Ovary (tissue), 10 donors: ENCODE measurements at regions of chr3 and their contacts with region 1.

Region 1: GRCh38 chr3:134250717-134251220 is at the start of gene RYK:
- DNase-seq: peak; percentile 73 to 88 (median 82)
- H3K4me3 ChIP-seq: peak within 1 kb of the TSS; percentile 83
- H3K27ac ChIP-seq: peak within 1 kb of the TSS; percentile 93 to 97
- H3K4me1 ChIP-seq: peaks cover 17% of the 10 kb centered on the region
- H3K27me3 ChIP-seq: no peaks in the 10 kb centered on the region
- CTCF ChIP-seq: peak in 1 of 3 donors; percentile 14
- EP300 ChIP-seq: no peak
- POLR2A ChIP-seq: peak; percentile 71
- total RNA-seq, gene RYK: 100 to 171 (median 125) TPM

Region 2: GRCh38 chr3:134294302-134295280 is 43.8 kb after region 1 on chr3:
- intact Hi-C with region 1: loop called in 1 of 4 experiments (anchors 5 kb)
- DNase-seq: no peak
- H3K4me3 ChIP-seq: no peak overlapping the region
- H3K27ac ChIP-seq: no peak overlapping the region
- H3K4me1 ChIP-seq: peaks cover 8% of the 10 kb centered on the region
- H3K27me3 ChIP-seq: no peaks in the 10 kb centered on the region
- CTCF ChIP-seq: no peak
- EP300 ChIP-seq: no peak
- POLR2A ChIP-seq: no peak

Region 3: GRCh38 chr3:134333522-134334181 is 82.9 kb after region 1 on chr3:
- intact Hi-C with region 1: no loop called
- DNase-seq: no peak
- H3K4me3 ChIP-seq: no peak overlapping the region
- H3K27ac ChIP-seq: no peak overlapping the region
- H3K4me1 ChIP-seq: peaks cover 16% of the 10 kb centered on the region
- H3K27me3 ChIP-seq: no peaks in the 10 kb centered on the region
- CTCF ChIP-seq: no peak
- EP300 ChIP-seq: peak; percentile 25
- POLR2A ChIP-seq: no peak

Region 4: GRCh38 chr3:134485718-134486576 is 235.2 kb after region 1 on chr3 and contains the starts of genes ANAPC13 and CEP63:
- intact Hi-C with region 1: loop called in 1 of 4 experiments (anchors 1 kb)
- DNase-seq: peak; percentile 91 to 95 (median 92)
- H3K4me3 ChIP-seq: peak within 1 kb of the TSS; percentile 88
- H3K27ac ChIP-seq: peak within 1 kb of the TSS; percentile 92 to 93
- H3K4me1 ChIP-seq: peaks cover 5% of the 10 kb centered on the region
- H3K27me3 ChIP-seq: no peaks in the 10 kb centered on the region
- CTCF ChIP-seq: peak in 2 of 3 donors; percentile 8 to 30
- EP300 ChIP-seq: no peak
- POLR2A ChIP-seq: peak; percentile 69
- total RNA-seq, gene ANAPC13: 23.4 to 58.7 (median 42.6) TPM
- total RNA-seq, gene CEP63: 16.6 to 74.1 (median 22.8) TPM